ENCODE measurements at regions of chr6 and their contacts with region 1.

Region 1: DNA sequence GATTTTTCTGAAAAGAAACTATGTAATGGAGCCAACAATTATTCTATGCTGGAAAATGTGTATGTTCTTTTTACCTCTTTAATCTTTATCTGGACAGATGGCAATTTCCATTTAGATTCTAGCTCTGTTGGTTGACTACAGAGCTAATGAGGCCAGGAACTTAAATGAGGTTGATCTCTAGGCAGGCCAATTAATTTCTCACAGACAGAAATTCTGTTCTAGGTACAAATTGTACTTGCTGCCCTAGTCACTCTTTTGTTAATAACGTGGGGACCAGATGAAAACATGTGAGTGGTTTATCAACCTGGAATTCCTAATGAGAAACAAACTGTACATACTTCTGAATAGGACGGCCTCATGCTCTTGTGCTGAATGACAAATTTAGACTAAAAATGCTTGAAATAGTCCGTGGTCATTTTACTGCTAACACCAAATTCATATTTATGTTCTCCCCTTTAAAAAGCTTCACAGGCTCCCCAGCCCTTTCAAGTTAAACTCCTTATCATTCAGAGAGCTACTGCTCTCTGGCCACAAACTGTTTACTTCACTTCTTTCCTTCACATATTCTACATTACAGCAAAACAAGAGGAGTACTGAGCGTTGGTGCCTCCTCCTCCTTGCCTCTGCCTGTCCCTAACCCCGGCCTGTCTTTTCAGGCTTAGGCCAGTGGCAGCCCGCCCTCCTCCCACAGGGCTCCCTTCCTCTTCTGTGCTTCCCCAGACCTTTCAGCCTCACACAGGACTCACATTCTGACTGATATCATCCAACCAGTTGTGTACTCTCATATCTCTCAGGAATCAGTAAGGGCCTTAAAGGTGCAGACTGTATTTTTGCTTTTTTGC is 41.4 kb downstream of the DTNBP1 start:
- DNase-seq: peak; percentile 73
- ATAC-seq: peak; percentile 87

Region 2: DNA sequence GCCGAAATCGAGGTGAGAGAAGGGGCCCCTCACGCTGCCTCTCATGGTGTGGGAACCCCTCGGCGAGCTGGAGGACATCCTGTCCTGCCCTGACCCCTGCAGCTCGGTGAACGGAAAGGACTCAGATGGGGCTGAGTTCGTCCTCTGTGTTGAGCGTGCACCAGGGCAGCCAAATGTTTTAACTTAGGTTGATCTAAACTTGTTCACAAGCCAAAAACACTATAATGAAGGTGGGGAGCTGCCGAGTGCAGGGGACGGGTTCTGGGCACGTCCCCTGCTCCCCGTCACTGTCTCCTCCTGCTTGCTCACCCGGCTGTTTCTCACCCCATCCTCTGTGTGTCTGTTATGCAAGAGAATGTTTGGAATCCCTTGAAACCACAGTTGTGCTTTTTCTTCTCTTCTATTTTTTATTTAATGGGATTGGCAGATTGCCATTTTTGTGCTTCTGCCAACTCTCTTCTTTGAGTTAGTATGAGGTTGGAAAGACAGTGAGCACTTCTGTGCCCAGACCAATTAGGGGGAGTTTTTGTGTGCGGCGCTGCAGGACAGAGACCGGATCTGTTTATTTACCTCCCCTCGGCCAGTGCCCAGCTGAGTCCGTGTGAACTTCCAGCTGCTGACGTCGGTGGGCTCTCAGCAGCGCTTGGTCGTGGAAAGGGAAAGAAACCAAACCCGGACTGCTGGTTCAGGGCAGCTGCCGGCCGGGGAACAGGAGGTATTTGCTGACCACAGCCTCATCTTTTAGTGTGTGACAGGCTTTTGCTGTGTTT is 116.7 kb before region 1 on chr6:
- intact Hi-C with region 1: loop called (anchors 10 kb)
- DNase-seq: peak; percentile 79
- ATAC-seq: peak; percentile 74

Measured in left ventricle myocardium superior (tissue), 1 donor.